ENCODE measurements at regions of chr11 and their contacts with region 1.

Region 1: DNA sequence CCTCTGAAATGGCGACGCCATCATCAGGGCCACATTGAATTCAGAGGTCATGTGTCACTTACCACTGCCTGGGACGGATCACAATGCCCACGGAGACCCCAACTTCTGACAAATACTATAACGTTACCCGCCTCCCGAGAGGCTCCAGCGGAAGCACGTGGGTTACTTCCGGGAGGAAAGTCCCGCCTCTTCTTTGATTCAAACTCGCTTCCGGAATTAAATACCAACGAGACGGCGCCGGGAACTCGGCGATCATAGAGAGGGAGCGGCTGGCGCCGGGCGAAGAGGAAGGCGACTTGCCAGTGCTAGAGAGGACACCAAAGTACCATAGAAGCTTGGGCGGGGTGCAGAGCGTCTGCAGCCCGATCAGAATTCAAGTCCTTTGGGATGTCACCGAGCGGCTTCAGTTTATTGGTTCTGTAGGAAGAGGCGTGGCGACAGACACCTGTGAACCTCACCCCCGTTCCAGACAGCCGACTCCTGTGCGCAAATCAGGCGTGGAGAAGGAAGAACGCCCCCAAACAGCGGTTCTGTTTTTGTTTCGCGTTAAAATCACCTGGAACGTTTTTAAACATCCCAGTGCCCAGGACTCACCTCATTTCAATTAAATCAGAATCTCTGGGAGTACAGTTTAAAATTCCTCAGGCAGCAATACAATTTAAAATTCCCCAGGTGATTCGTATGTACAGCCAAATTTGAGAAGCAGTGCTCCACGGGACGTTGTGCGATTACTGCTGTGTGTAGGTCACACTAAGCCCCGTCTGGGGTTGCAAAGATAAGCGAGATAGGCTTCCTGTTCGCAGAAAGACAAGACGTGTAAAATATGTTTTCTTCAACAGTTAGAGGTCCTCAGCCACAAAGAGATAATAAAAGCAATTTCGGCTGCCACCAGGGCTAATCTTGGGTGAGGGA is at the start of gene TIMM10:
- DNase-seq: peak; percentile 97
- ATAC-seq: peak; percentile 95
- H3K4me3 Mint-ChIP-seq: peak within 1 kb of the TSS; percentile 81
- H3K27ac Mint-ChIP-seq: peak within 1 kb of the TSS; percentile 87
- H3K4me1 Mint-ChIP-seq: peaks cover 37% of the 10 kb centered on the region
- H3K27me3 Mint-ChIP-seq: no peaks in the 10 kb centered on the region
- total RNA-seq, gene TIMM10: 124 to 158 TPM

Region 2: GRCh38 chr11:57426929-57427726 is 103.7 kb before region 1 on chr11 and contains the start of gene SLC43A3:
- CTCF ChIA-PET with region 1: interaction called, 3 read pairs
- POLR2A ChIA-PET with region 1: no interaction called
- intact Hi-C with region 1: loop called in 1 of 2 experiments (anchors 1 kb)
- DNase-seq: peak; percentile 90
- ATAC-seq: peak; percentile 67
- H3K4me3 Mint-ChIP-seq: peak within 1 kb of the TSS; percentile 98
- H3K27ac Mint-ChIP-seq: peak within 1 kb of the TSS; percentile 95
- H3K4me1 Mint-ChIP-seq: peaks cover 34% of the 10 kb centered on the region
- H3K27me3 Mint-ChIP-seq: no peaks in the 10 kb centered on the region
- total RNA-seq, gene SLC43A3: 268 to 333 TPM

Region 3: GRCh38 chr11:57493507-57494503 is 37.0 kb before region 1 on chr11:
- CTCF ChIA-PET with region 1: interaction called, 262 read pairs
- POLR2A ChIA-PET with region 1: interaction called, 6 read pairs
- intact Hi-C with region 1: loop called (anchors 1 kb)
- DNase-seq: peak; percentile 88
- ATAC-seq: peak; percentile 81
- H3K4me3 Mint-ChIP-seq: no peak overlapping the region
- H3K27ac Mint-ChIP-seq: peak overlapping the region; percentile 89
- H3K4me1 Mint-ChIP-seq: peaks cover 9% of the 10 kb centered on the region
- H3K27me3 Mint-ChIP-seq: no peaks in the 10 kb centered on the region

Region 4: DNA sequence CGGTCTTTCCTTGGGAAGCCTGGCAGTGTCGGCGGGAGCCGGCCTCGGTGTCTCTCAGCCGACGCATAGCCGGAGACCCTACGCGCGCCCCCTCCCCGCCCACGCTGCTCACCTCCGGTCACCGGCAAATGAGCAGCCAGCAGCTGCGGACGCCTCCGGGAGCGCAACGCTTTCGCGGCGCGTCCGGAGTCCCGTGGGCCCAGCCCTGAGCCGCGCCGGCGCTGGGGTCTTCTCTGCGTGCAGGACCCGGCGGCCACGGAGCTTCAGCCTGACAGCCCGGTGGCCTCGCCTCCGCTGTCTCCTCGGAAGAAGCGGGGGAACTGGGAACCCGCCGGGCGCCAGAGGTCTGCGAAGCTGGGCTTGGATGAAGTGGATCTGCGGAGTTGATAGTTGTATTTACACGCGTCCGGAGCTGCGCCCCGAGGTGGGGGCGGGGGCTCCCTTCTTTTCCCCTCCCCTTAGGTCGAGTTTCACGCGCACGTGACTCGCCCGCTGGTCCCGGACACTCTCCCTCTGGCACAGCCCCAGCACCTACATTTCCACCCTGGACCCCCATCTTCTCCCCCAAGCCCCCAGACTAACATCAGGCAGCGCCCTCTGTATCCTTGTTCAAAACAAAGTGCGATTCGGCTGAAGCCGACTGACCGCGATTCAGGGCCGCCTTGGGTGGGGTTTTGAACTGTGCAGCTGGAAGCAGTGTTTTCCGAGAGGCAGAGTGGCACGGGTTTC is 15.4 kb before region 1 on chr11 and contains the start of gene SLC43A1:
- CTCF ChIA-PET with region 1: interaction called, 100 read pairs
- POLR2A ChIA-PET with region 1: interaction called, 4 read pairs
- intact Hi-C with region 1: loop called (anchors 1 kb)
- DNase-seq: peak; percentile 62
- ATAC-seq: peak; percentile 46
- H3K4me3 Mint-ChIP-seq: peak within 1 kb of the TSS; percentile 91
- H3K27ac Mint-ChIP-seq: peak within 1 kb of the TSS; percentile 91
- H3K4me1 Mint-ChIP-seq: peaks cover 31% of the 10 kb centered on the region
- H3K27me3 Mint-ChIP-seq: no peaks in the 10 kb centered on the region
- total RNA-seq, gene SLC43A1: 27.6 to 28.7 TPM

Region 5: GRCh38 chr11:57657194-57658022 is 126.6 kb after region 1 on chr11 and contains the start of gene CLP1:
- CTCF ChIA-PET with region 1: interaction called, 7 read pairs
- POLR2A ChIA-PET with region 1: no interaction called
- intact Hi-C with region 1: loop called (anchors 1 kb)
- DNase-seq: peak; percentile 100
- ATAC-seq: peak; percentile 98
- H3K4me3 Mint-ChIP-seq: peak within 1 kb of the TSS; percentile 83
- H3K27ac Mint-ChIP-seq: peak within 1 kb of the TSS; percentile 95
- H3K4me1 Mint-ChIP-seq: peaks cover 29% of the 10 kb centered on the region
- H3K27me3 Mint-ChIP-seq: no peaks in the 10 kb centered on the region
- total RNA-seq, gene CLP1: 11.9 to 15.9 TPM

Region 6: DNA sequence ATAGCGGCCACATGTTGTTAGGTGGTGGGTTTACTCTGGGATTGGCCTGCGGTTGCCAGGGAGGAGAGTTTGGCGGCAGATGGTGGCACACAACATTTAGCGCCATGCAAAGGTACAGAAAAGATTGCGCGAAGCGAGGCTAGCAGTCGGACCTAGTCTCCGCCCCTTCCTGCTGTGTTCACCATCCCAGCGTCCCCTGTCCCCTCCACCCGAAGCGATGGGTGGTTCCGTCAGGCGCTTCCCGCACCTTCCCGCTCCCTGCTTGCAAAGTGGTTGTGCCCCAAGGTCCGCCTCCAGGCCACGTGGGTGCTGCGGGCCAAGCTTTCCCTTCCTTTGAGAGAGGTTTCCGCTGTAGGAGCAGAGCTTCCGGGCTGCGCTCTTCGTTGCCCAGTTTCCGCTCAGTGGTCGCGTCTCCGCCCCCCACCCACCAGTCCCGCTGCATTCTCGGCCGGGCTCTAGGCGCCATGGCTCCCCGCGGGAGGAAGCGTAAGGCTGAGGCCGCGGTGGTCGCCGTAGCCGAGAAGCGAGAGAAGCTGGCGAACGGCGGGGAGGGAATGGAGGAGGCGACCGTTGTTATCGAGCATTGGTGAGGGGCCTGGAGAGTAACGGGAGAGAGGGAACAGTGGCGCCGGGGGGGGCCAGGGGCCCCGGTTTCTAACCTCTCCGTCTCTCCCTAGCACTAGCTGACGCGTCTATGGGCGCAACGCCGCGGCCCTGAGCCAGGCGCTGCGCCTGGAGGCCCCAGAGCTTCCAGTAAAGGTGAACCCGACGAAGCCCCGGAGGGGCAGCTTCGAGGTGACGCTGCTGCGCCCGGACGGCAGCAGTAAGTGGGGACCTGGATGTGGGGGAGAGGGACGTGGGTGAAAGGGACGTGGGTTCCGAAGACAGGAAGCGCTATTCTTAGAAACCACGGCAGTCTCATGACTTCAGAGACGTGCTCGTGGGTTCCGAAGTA is 210.6 kb after region 1 on chr11 and contains the start of gene SELENOH:
- CTCF ChIA-PET with region 1: interaction called, 3 read pairs
- POLR2A ChIA-PET with region 1: no interaction called
- intact Hi-C with region 1: loop called in 1 of 2 experiments (anchors 1 kb)
- DNase-seq: peak; percentile 98
- ATAC-seq: peak; percentile 94
- H3K4me3 Mint-ChIP-seq: peak within 1 kb of the TSS; percentile 98
- H3K27ac Mint-ChIP-seq: peak within 1 kb of the TSS; percentile 100
- H3K4me1 Mint-ChIP-seq: peaks cover 28% of the 10 kb centered on the region
- H3K27me3 Mint-ChIP-seq: no peaks in the 10 kb centered on the region
- total RNA-seq, gene SELENOH: 117 to 244 TPM

Region 7: GRCh38 chr11:57868491-57868890 is 337.6 kb after region 1 on chr11:
- CTCF ChIA-PET with region 1: no interaction called
- POLR2A ChIA-PET with region 1: no interaction called
- intact Hi-C with region 1: no loop called
- DNase-seq: no peak
- ATAC-seq: no peak
- H3K4me3 Mint-ChIP-seq: no peak overlapping the region
- H3K27ac Mint-ChIP-seq: no peak overlapping the region
- H3K4me1 Mint-ChIP-seq: no peaks in the 10 kb centered on the region
- H3K27me3 Mint-ChIP-seq: peaks cover 3% of the 10 kb centered on the region

Region 8: GRCh38 chr11:57942808-57943207 is 412.0 kb after region 1 on chr11:
- CTCF ChIA-PET with region 1: no interaction called
- POLR2A ChIA-PET with region 1: no interaction called
- intact Hi-C with region 1: no loop called
- DNase-seq: no peak
- ATAC-seq: no peak
- H3K4me3 Mint-ChIP-seq: no peak overlapping the region
- H3K27ac Mint-ChIP-seq: no peak overlapping the region
- H3K4me1 Mint-ChIP-seq: no peaks in the 10 kb centered on the region
- H3K27me3 Mint-ChIP-seq: peaks cover 9% of the 10 kb centered on the region

Measured in activated CD4-positive, alpha-beta T cell treated with anti-CD3 and anti-CD28 coated beads for 36 hours (primary cell).